Activated naive CD4-positive, alpha-beta T cell treated with anti-CD3 and anti-CD28 coated beads for 36 hours (primary cell): ENCODE measurements at regions of chr14 and their contacts with region 1.

Region 1: DNA sequence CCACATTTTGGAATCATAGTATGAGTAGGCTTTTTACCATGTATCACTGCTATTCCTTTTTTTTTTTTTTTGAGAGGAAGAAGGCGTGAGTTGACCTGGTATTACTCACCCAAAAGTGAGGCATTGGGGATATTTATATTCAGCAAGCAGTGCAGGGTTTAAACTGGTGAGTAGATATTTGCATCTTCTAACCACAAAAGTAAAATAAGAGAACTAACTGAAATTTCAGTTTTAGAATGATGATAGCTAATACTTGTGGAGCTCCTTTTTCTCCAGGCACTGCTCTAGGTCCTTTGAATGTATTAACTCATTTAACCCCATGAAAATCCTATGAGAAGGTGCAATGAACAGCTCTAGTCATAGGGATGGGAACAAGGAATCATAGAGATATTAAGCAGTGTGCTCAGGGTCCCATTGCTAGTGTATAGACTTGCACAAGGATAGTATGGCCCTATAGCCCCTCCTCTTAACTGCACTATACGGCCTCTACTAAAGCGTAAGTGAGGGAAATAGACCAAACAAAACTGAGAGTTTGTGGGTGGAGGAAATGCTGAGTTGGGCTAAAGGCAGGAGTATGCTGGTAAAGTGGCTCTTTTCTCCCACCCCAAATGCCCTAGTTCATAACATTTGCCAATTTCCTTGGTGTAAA is 104.3 kb upstream of the MAX start:
- DNase-seq: peak; percentile 29
- H3K4me3 Mint-ChIP-seq: peak overlapping the region; percentile 6
- H3K27ac Mint-ChIP-seq: peak overlapping the region; percentile 71
- H3K4me1 Mint-ChIP-seq: peaks cover 62% of the 10 kb centered on the region
- H3K27me3 Mint-ChIP-seq: peaks cover 3% of the 10 kb centered on the region

Region 2: GRCh38 chr14:65179918-65180724 is 26.5 kb before region 1 on chr14:
- CTCF ChIA-PET with region 1: interaction called, 3 read pairs
- intact Hi-C with region 1: loop called (anchors 1 kb)
- DNase-seq: peak; percentile 82
- H3K4me3 Mint-ChIP-seq: no peak overlapping the region
- H3K27ac Mint-ChIP-seq: peak overlapping the region; percentile 47
- H3K4me1 Mint-ChIP-seq: peaks cover 13% of the 10 kb centered on the region
- H3K27me3 Mint-ChIP-seq: peaks cover 4% of the 10 kb centered on the region

Region 3: GRCh38 chr14:65302571-65303189 is 96.1 kb after region 1 on chr14:
- CTCF ChIA-PET with region 1: no interaction called
- intact Hi-C with region 1: loop called (anchors 1 kb)
- DNase-seq: peak; percentile 82
- H3K4me3 Mint-ChIP-seq: peak overlapping the region; percentile 23
- H3K27ac Mint-ChIP-seq: peak overlapping the region; percentile 95
- H3K4me1 Mint-ChIP-seq: peaks cover 61% of the 10 kb centered on the region
- H3K27me3 Mint-ChIP-seq: no peaks in the 10 kb centered on the region

Region 4: GRCh38 chr14:65396082-65396910 is 189.7 kb after region 1 on chr14:
- CTCF ChIA-PET with region 1: no interaction called
- intact Hi-C with region 1: loop called (anchors 1 kb)
- DNase-seq: peak; percentile 19
- H3K4me3 Mint-ChIP-seq: no peak overlapping the region
- H3K27ac Mint-ChIP-seq: peak overlapping the region; percentile 42
- H3K4me1 Mint-ChIP-seq: peaks cover 24% of the 10 kb centered on the region
- H3K27me3 Mint-ChIP-seq: no peaks in the 10 kb centered on the region

Region 5: GRCh38 chr14:65704850-65705249 is 498.3 kb after region 1 on chr14:
- CTCF ChIA-PET with region 1: no interaction called
- intact Hi-C with region 1: loop called (anchors 1 kb)
- DNase-seq: peak; percentile 75
- H3K4me3 Mint-ChIP-seq: no peak overlapping the region
- H3K27ac Mint-ChIP-seq: peak overlapping the region; percentile 72
- H3K4me1 Mint-ChIP-seq: peaks cover 12% of the 10 kb centered on the region
- H3K27me3 Mint-ChIP-seq: no peaks in the 10 kb centered on the region

Region 6: GRCh38 chr14:65927931-65928356 is 721.4 kb after region 1 on chr14:
- CTCF ChIA-PET with region 1: no interaction called
- intact Hi-C with region 1: loop called (anchors 1 kb)
- DNase-seq: peak; percentile 96
- H3K4me3 Mint-ChIP-seq: no peak overlapping the region
- H3K27ac Mint-ChIP-seq: peak overlapping the region; percentile 22
- H3K4me1 Mint-ChIP-seq: peaks cover 41% of the 10 kb centered on the region
- H3K27me3 Mint-ChIP-seq: no peaks in the 10 kb centered on the region